Dorsolateral prefrontal cortex (tissue), 120 donors: ENCODE measurements at regions of chr2 and their contacts with region 1.

Region 1: DNA sequence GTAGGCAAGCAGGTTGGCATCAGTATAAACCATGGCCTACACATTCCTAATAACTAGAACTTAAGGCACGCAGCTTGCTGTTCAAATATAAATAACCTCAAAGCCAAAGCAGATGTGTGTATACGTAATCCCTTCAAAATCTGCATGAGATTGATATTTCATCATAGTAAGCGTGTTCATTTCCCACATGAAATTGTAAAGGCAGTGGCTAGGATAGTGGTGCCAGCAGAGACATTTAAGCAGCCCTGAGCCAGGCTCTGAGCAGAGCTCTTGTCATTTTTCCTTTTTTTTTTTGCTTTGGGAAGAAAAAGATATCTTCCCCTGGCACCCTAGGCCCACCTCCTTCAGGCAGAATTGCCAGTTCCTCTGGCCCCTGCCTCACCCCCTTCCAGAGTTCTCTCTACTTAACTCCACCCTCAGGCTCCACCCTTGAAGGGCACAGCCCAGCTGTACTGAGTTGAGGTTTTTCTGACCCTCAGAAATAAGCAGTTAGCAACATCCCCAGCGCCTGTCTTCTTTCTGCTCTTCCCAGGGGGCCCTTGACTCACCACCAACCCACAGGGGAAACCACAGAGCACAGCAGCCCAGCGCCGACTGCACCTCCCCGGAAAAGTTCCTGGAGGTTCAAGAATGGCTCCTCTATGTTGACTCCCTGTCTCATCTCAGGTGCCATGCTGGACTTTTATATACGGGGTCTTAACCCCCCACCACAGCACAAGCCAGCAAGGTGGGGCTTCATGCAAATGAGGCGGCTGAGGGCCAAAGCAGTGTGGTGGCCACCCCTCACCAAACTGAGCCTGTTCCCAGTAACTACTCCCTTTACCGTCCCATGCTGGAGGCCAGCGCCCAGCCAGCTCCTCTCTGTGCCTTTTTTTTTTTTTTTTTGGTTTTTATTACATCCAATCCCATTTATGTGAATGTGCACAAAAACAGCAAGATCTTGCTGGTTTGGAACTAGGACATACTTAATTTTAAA is 84.7 kb downstream of the EHD3 start:
- DNase-seq: no peak
- H3K4me3 ChIP-seq: no peak overlapping the region
- H3K27ac ChIP-seq: no peak overlapping the region
- H3K27me3 ChIP-seq: peaks cover 0 to 5% (median 0%) of the 10 kb centered on the region in 45 donors
- CTCF ChIP-seq: no peak

Region 2: DNA sequence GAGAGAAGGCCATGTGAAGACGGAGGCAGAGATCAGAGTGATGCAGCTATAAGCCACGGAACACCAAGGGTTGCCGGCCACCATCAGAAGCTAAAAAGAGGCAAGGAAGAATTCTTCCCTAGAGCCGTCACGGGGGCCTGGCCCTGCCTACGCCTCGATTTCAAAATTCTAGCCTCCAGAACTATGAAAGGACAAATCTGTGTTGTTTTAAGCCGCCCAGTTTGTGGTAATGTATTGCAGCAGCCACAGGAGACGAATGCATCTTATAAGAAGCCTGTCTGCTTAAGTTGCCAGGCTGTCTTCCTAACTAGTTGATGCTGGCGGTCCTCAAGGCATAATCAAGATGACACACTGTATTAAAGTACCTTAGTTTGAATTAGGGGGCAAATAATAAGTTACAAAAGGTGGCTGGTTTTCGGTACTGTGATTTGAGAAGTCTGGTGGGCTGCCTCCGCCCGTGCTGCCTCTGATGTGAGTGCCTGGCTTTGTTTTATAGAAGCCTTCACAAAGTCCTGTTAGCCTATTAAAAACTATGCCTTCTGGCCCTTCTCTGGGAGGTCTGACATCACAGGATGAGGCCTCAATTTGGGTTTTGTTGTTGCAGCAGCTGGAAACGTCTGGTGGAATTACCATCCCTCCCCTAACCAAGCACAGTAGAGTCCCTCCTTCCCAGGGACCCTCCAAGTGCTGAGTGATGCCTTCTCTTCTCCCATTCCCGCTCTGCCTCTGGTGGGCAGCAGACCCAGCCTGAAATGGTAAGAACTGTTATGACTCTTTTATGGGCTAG is 208.5 kb after region 1 on chr2:
- intact Hi-C with region 1: no loop called
- DNase-seq: no peak
- H3K4me3 ChIP-seq: no peak overlapping the region
- H3K27ac ChIP-seq: no peak overlapping the region
- H3K27me3 ChIP-seq: peaks cover 0 to 37% (median 5%) of the 10 kb centered on the region in 45 donors
- CTCF ChIP-seq: no peak

Region 3: DNA sequence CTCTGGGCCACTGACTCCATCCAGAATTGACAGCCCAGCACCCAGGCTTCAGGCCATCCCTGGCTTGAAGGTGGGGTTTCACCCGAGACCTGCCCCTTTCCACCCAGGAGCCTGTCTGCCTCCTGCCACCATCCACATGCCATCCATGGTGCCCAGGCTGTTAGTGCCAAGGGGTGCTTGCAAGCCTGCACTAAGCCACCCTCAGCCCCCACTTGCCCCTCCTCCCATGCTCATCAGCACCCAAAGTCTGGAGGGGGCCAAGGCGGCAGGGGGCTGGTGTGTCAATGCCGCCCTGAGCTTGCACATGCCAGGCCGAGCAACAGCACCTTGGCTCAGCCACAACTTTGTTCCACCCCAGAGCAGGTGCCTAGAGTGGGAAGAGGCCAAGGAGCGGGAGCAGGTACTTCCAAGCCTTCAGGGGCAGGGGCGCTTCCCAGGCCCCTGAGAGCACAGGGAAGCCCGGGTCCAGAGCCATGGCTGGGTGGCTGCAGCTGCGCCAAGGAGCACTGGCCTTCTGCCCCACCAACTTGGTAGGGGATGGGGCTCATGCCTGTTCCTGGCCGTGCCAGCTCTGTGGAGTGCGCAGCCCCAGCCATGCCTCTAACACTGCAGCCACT is 250.0 kb after region 1 on chr2:
- intact Hi-C with region 1: loop called in 1 of 2 experiments (anchors 5 kb)
- DNase-seq: no peak
- H3K4me3 ChIP-seq: no peak overlapping the region
- H3K27ac ChIP-seq: no peak overlapping the region
- H3K27me3 ChIP-seq: peaks cover 0 to 4% (median 0%) of the 10 kb centered on the region in 45 donors
- CTCF ChIP-seq: no peak